ENCODE measurements at regions of chr7 and their contacts with region 1.

Region 1: GRCh38 chr7:107725151-107725740 is 18.7 kb upstream of the CBLL1 start:
- DNase-seq: peak; percentile 60
- H3K4me3 ChIP-seq: no peak overlapping the region
- H3K27ac ChIP-seq: no peak overlapping the region
- H3K4me1 ChIP-seq: no peaks in the 10 kb centered on the region
- H3K27me3 ChIP-seq: no peaks in the 10 kb centered on the region
- CTCF ChIP-seq: peak; percentile 62

Region 2: GRCh38 chr7:106793015-106793975 is 932.0 kb before region 1 on chr7:
- CTCF ChIA-PET with region 1: no interaction called
- dilution Hi-C with region 1: no loop called
- in situ Hi-C with region 1: no loop called
- intact Hi-C with region 1: loop called (anchors 10 kb)
- DNase-seq: peak; percentile 12
- H3K4me3 ChIP-seq: no peak overlapping the region
- H3K27ac ChIP-seq: no peak overlapping the region
- H3K4me1 ChIP-seq: no peaks in the 10 kb centered on the region
- H3K27me3 ChIP-seq: peaks cover 5% of the 10 kb centered on the region
- CTCF ChIP-seq: peak; percentile 51 to 71

Region 3: GRCh38 chr7:107201795-107202450 is 523.3 kb before region 1 on chr7:
- CTCF ChIA-PET with region 1: no interaction called
- dilution Hi-C with region 1: no loop called
- in situ Hi-C with region 1: loop called in 1 of 2 experiments (anchors 10 kb)
- intact Hi-C with region 1: loop called (anchors 1 kb)
- DNase-seq: peak; percentile 37
- H3K4me3 ChIP-seq: no peak overlapping the region
- H3K27ac ChIP-seq: no peak overlapping the region
- H3K4me1 ChIP-seq: no peaks in the 10 kb centered on the region
- H3K27me3 ChIP-seq: no peaks in the 10 kb centered on the region
- CTCF ChIP-seq: peak; percentile 69 to 71

Region 4: DNA sequence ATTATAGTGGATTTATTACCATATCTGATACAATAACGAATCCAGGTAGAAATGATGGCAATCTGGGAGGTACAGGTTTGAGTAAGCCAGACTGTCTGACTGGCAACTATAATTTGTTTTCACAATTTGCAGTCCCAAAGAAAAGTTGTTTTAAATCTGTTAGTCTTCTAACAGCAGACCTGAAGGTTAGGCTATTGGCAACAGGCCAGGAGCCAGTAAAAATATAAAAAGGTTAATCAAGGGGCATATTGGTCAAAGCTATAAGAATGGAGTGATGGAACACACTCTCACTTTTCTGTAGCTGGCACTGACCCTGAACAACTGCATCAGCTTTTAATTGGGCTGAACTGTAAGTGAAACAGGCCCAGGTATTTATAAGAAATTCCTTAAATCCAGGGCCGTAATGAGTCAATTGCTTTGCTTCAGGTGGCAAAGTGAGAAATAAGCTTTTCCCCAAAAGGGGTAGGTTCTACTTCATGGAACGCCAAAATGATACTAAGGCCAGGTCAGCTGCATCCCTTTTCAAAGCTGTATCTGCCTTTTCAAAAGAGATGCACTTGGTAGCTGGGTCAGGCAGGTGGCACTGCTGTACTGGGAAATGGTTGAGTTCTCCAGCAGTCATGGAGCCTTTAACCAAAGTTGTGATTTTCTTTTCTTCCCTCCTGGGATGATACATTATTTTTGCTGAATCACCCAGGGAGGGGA is 262.4 kb before region 1 on chr7:
- CTCF ChIA-PET with region 1: no interaction called
- dilution Hi-C with region 1: no loop called
- in situ Hi-C with region 1: loop called (anchors 10 kb)
- intact Hi-C with region 1: loop called (anchors 1 kb)
- DNase-seq: peak; percentile 60
- H3K4me3 ChIP-seq: no peak overlapping the region
- H3K27ac ChIP-seq: no peak overlapping the region
- H3K4me1 ChIP-seq: no peaks in the 10 kb centered on the region
- H3K27me3 ChIP-seq: no peaks in the 10 kb centered on the region
- CTCF ChIP-seq: peak; percentile 88 to 91

Region 5: GRCh38 chr7:107579885-107580715 is 145.1 kb before region 1 on chr7 and contains the start of gene BCAP29:
- CTCF ChIA-PET with region 1: no interaction called
- dilution Hi-C with region 1: no loop called
- in situ Hi-C with region 1: no loop called
- intact Hi-C with region 1: loop called (anchors 1 kb)
- DNase-seq: peak; percentile 65
- H3K4me3 ChIP-seq: peak within 1 kb of the TSS; percentile 68 to 88 (median 82)
- H3K27ac ChIP-seq: peak within 1 kb of the TSS; percentile 75
- H3K4me1 ChIP-seq: peaks cover 9% of the 10 kb centered on the region
- H3K27me3 ChIP-seq: no peaks in the 10 kb centered on the region
- CTCF ChIP-seq: peak in 1 of 2 donors; percentile 38
- total RNA-seq, gene BCAP29: 92.1 to 129 TPM

Region 6: DNA sequence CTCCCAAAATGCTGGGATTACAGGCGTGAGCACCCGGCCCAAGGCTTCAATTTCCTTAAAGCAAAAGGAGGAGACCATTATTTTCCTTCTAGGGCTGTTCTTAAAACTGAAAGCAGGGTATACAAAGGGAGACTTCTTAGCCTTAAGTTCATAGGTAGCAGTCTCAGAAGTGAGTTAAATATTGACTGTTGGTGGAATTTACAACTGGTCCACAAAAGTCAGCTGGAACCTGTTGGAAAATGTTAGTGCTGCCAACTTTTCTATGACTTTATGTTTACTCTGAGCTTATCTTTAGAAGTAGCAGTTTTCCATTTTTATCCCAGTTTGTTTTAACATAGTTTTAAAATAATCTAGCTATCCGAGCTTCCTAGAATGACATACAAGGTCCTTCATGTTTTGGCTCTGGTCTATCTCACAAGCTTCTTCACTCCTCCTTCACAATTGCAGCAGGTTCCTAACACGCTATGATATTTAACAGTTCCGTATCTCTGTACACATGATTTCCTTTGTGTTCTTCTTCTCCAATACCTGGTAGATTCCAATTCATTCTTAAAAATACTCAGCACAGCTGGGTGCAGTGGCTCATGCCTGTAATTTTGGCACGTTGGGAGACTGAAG is 74.5 kb after region 1 on chr7:
- CTCF ChIA-PET with region 1: no interaction called
- dilution Hi-C with region 1: no loop called
- in situ Hi-C with region 1: no loop called
- intact Hi-C with region 1: no loop called
- DNase-seq: no peak
- H3K4me3 ChIP-seq: no peak overlapping the region
- H3K27ac ChIP-seq: no peak overlapping the region
- H3K4me1 ChIP-seq: no peaks in the 10 kb centered on the region
- H3K27me3 ChIP-seq: peaks cover 2% of the 10 kb centered on the region
- CTCF ChIP-seq: no peak

Region 7: GRCh38 chr7:107879400-107880035 is 154.3 kb after region 1 on chr7:
- CTCF ChIA-PET with region 1: no interaction called
- dilution Hi-C with region 1: no loop called
- in situ Hi-C with region 1: no loop called
- intact Hi-C with region 1: loop called (anchors 1 kb)
- DNase-seq: peak; percentile 55
- H3K4me3 ChIP-seq: no peak overlapping the region
- H3K27ac ChIP-seq: no peak overlapping the region
- H3K4me1 ChIP-seq: peaks cover 6% of the 10 kb centered on the region
- H3K27me3 ChIP-seq: no peaks in the 10 kb centered on the region
- CTCF ChIP-seq: peak; percentile 82 to 90